ENCODE measurements at regions of chr5 and their contacts with region 1.

Region 1: DNA sequence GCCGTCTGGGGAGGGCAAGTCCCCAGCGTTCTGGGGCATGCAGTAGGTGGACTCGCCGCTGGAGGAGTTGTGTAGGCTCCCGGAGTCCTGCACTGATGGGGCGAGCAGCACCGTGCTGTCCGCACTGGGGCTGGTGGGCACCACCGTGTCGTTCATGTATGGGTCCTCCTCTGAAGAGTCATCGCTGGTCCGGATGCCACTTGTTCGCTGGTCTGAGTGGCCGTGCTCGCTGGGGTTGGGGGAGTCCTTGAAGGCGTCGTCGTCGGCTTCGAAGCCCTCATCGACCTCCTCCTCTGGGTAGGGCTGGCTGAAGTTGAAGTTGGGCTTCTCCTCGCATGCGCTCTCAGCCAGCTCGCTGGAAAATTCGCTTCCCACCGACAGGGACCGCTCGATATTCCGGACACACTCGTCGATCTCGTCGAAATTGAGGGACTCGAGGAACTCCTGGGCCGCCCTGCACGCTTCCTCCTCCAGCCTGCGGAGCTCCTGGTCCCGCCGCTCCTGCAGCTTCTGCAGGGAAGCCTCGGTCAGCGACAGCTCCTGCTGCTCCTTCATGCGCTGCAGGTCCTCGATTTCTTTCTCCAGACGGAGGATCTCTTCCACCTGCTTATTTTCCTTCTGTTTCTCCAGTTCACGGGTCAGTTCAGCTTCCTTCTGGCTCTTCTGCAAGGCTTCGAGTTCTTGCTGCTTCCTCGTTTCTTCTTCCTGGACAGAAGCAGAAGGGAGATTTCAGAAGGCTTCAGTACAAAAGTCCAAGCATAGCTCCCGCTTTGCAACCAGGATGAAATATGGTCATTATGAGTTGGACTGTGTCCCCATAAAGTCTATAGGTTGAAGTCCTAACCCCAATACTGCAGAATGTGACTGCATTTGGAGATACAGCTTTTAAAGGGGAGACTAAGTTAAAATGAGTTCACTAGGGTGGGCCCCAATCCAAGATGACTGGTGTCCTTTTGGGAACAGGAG is 84.6 kb upstream of the RETREG1 start:
- DNase-seq: no peak
- H3K4me3 ChIP-seq: peak overlapping the region in 52 of 59 donors; percentile 24 to 73 (median 49)
- H3K27ac ChIP-seq: peak overlapping the region in 57 of 59 donors; percentile 38 to 98 (median 92)
- H3K27me3 ChIP-seq: no peaks in the 10 kb centered on the region
- CTCF ChIP-seq: no peak

Region 2: GRCh38 chr5:16736158-16736995 is 35.0 kb after region 1 on chr5:
- intact Hi-C with region 1: loop called in 1 of 2 experiments (anchors 5 kb)
- DNase-seq: peak in 2 of 10 donors; percentile 26 to 41
- H3K4me3 ChIP-seq: peak overlapping the region in 55 of 59 donors; percentile 0 to 69 (median 39)
- H3K27ac ChIP-seq: peak overlapping the region in 53 of 59 donors; percentile 10 to 87 (median 66)
- H3K27me3 ChIP-seq: no peaks in the 10 kb centered on the region
- CTCF ChIP-seq: peak in 2 of 56 donors; percentile 9 to 24